Activated CD4-positive, alpha-beta T cell treated with anti-CD3 and anti-CD28 coated beads, Interleukin-2, amount 10 ng/mL, durations not matched to agents 24 days and 14 days (primary cell): ENCODE measurements at regions of chr18 and their contacts with region 1.

Region 1: GRCh38 chr18:79517341-79517740 is 121.6 kb downstream of the NFATC1 start:
- DNase-seq: peak; percentile 83
- H3K4me3 Mint-ChIP-seq: peak overlapping the region; percentile 83
- H3K27ac Mint-ChIP-seq: peak overlapping the region; percentile 97
- H3K4me1 Mint-ChIP-seq: peaks cover 53% of the 10 kb centered on the region
- H3K27me3 Mint-ChIP-seq: no peaks in the 10 kb centered on the region

Region 2: GRCh38 chr18:79353267-79353666 is 164.1 kb before region 1 on chr18:
- intact Hi-C with region 1: no loop called
- DNase-seq: no peak
- H3K4me3 Mint-ChIP-seq: no peak overlapping the region
- H3K27ac Mint-ChIP-seq: no peak overlapping the region
- H3K4me1 Mint-ChIP-seq: no peaks in the 10 kb centered on the region
- H3K27me3 Mint-ChIP-seq: no peaks in the 10 kb centered on the region

Region 3: GRCh38 chr18:79507076-79507545 is 10.2 kb before region 1 on chr18:
- intact Hi-C with region 1: loop called (anchors 1 kb)
- DNase-seq: peak; percentile 77
- H3K4me3 Mint-ChIP-seq: peak overlapping the region; percentile 73
- H3K27ac Mint-ChIP-seq: peak overlapping the region; percentile 87
- H3K4me1 Mint-ChIP-seq: peaks cover 49% of the 10 kb centered on the region
- H3K27me3 Mint-ChIP-seq: no peaks in the 10 kb centered on the region